CD4-positive, alpha-beta memory T cell (primary cell): ENCODE measurements at regions of chr1 and their contacts with region 1.

Region 1: GRCh38 chr1:210360852-210361477 is 32.3 kb downstream of the HHAT start:
- DNase-seq: peak in 4 of 5 donors; percentile 17 to 34 (median 21)
- H3K4me3 ChIP-seq: no peak overlapping the region
- H3K4me3 Mint-ChIP-seq: no peak overlapping the region
- H3K27ac ChIP-seq: no peak overlapping the region
- H3K27ac Mint-ChIP-seq: no peak overlapping the region
- H3K4me1 ChIP-seq: no peaks in the 10 kb centered on the region
- H3K4me1 Mint-ChIP-seq: peaks cover 0 to 9% (median 3%) of the 10 kb centered on the region in 4 donors
- H3K27me3 ChIP-seq: no peaks in the 10 kb centered on the region
- H3K27me3 Mint-ChIP-seq: no peaks in the 10 kb centered on the region

Region 2: DNA sequence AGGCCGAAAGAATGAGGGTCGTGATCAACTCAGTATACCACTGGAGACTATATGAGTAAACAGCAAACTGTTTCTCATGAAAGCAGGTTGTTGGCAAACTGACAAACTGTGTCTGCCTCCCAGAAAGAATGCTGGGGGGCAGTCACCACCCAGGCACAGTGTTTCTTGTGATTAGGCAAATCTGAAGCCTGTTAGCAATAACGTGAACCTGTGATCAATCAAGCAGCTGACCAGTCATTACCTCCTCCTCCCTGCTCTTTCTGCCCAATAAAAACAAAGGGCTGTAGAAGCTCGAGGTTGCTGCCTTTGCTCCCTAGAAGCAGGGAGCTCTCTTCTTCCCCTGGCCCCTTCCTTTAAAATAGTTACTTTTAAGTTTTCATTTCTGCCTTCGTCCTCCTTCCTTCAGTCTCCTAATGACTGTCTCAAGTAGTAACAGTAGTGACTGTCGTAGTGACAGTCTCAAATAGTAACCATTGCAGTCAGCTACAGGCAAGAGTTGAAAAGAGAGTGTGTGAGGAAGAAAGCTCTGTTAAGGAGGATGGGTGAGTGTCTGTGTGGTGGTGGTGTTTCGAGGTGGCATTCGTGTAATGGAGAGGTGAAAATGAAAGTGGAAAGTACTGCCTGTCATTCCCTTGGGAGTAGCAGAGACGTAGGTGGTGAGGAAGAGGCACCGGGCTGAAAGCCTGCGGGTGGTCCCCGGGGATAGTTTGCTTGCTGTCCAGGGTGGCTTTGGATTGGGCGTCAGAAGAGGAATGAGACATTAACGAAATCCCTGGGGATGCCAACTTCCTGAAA is 17.8 kb before region 1 on chr1:
- CTCF ChIA-PET with region 1: interaction called, 16 read pairs
- POLR2A ChIA-PET with region 1: interaction called, 3 read pairs
- intact Hi-C with region 1: loop called (anchors 2 kb)
- DNase-seq: peak in 1 of 5 donors; percentile 8
- H3K4me3 ChIP-seq: no peak overlapping the region
- H3K4me3 Mint-ChIP-seq: no peak overlapping the region
- H3K27ac ChIP-seq: no peak overlapping the region
- H3K27ac Mint-ChIP-seq: no peak overlapping the region
- H3K4me1 ChIP-seq: peaks cover 46% of the 10 kb centered on the region
- H3K4me1 Mint-ChIP-seq: peaks cover 0 to 21% (median 12%) of the 10 kb centered on the region in 4 donors
- H3K27me3 ChIP-seq: no peaks in the 10 kb centered on the region
- H3K27me3 Mint-ChIP-seq: no peaks in the 10 kb centered on the region

Region 3: GRCh38 chr1:210400043-210400840 is 39.3 kb after region 1 on chr1:
- CTCF ChIA-PET with region 1: interaction called, 25 read pairs
- POLR2A ChIA-PET with region 1: no interaction called
- intact Hi-C with region 1: loop called (anchors 1 kb)
- DNase-seq: peak; percentile 45 to 57 (median 46)
- H3K4me3 ChIP-seq: no peak overlapping the region
- H3K4me3 Mint-ChIP-seq: peak overlapping the region in 6 of 8 donors; percentile 14 to 78 (median 70)
- H3K27ac ChIP-seq: no peak overlapping the region
- H3K27ac Mint-ChIP-seq: peak overlapping the region; percentile 70 to 91 (median 85)
- H3K4me1 ChIP-seq: peaks cover 16% of the 10 kb centered on the region
- H3K4me1 Mint-ChIP-seq: peaks cover 19 to 29% (median 23%) of the 10 kb centered on the region in 4 donors
- H3K27me3 ChIP-seq: no peaks in the 10 kb centered on the region
- H3K27me3 Mint-ChIP-seq: peaks cover 0 to 2% of the 10 kb centered on the region in 2 donors

Region 4: DNA sequence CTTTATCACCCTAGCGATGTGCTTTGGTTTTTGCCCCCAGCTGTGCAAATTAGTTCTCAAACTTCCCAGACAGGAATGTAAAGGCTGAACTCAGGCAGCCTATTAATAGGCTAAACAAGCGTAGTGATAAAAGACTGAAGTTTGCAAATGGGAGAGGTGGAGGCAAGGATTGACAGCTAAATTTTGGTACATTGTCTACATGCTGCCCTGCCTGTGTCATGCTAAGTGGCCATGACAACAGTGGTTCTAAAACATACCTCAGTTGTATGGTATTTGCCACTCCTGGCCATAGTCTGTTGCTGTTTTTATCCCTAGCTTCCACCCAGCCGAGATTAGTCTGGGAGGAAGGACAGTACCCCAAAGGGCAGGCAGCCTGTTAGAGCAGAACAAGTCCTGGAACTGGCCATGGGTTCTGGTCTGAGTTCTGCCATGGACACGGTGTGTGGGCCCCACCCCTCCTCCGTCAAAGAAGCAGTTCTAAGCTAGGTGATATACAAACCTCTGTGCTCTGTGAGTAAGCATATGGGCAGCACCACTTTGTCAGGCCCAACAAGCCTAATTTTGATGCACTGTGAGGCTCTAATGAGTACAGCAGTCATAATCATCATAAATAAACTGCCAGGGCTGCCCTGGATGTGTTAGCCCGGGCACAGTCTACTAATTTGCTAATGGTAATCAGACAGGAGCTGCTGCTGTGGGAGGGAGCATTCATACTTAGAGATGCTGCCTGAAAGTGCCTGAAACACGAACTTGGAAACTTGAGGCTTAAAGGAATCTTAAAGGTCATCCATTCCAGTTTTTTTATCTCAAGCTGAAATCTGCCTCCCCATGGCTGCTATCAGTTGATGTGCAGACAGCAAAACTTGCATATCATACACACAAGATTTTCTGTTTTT is 144.9 kb after region 1 on chr1:
- CTCF ChIA-PET with region 1: no interaction called
- POLR2A ChIA-PET with region 1: no interaction called
- intact Hi-C with region 1: no loop called
- DNase-seq: no peak
- H3K4me3 ChIP-seq: no peak overlapping the region
- H3K4me3 Mint-ChIP-seq: no peak overlapping the region
- H3K27ac ChIP-seq: no peak overlapping the region
- H3K27ac Mint-ChIP-seq: no peak overlapping the region
- H3K4me1 ChIP-seq: no peaks in the 10 kb centered on the region
- H3K4me1 Mint-ChIP-seq: no peaks in the 10 kb centered on the region
- H3K27me3 ChIP-seq: no peaks in the 10 kb centered on the region
- H3K27me3 Mint-ChIP-seq: no peaks in the 10 kb centered on the region